ENCODE measurements at regions of chr14 and their contacts with region 1.

Region 1: GRCh38 chr14:67619446-67620216 is at the start of gene ARG2:
- DNase-seq: peak; percentile 98
- ATAC-seq: peak; percentile 94
- H3K4me3 ChIP-seq: peak within 1 kb of the TSS; percentile 57 to 94 (median 81)
- H3K4me3 Mint-ChIP-seq: peak within 1 kb of the TSS; percentile 92
- H3K27ac ChIP-seq: peak within 1 kb of the TSS; percentile 76 to 78
- H3K27ac Mint-ChIP-seq: peak within 1 kb of the TSS; percentile 94
- H3K4me1 ChIP-seq: peaks cover 12 to 18% of the 10 kb centered on the region in 2 donors
- H3K4me1 Mint-ChIP-seq: peaks cover 23% of the 10 kb centered on the region
- H3K27me3 ChIP-seq: peaks cover 0 to 4% (median 0%) of the 10 kb centered on the region in 4 experiments
- H3K27me3 Mint-ChIP-seq: no peaks in the 10 kb centered on the region
- CTCF ChIP-seq: no peak
- total RNA-seq, gene ARG2: 1.8 and 2.0 TPM in 2 replicates

Region 2: GRCh38 chr14:67666750-67667449 is 47.3 kb after region 1 on chr14:
- CTCF ChIA-PET with region 1: interaction called, 24 read pairs
- POLR2A ChIA-PET with region 1: no interaction called
- intact Hi-C with region 1: loop called (anchors 2 kb)
- DNase-seq: peak; percentile 74
- ATAC-seq: peak; percentile 75
- H3K4me3 ChIP-seq: no peak overlapping the region
- H3K4me3 Mint-ChIP-seq: peak overlapping the region; percentile 60
- H3K27ac ChIP-seq: peak overlapping the region; percentile 45 to 74
- H3K27ac Mint-ChIP-seq: peak overlapping the region; percentile 78
- H3K4me1 ChIP-seq: peaks cover 22 to 23% of the 10 kb centered on the region in 2 donors
- H3K4me1 Mint-ChIP-seq: peaks cover 51% of the 10 kb centered on the region
- H3K27me3 ChIP-seq: no peaks in the 10 kb centered on the region
- H3K27me3 Mint-ChIP-seq: no peaks in the 10 kb centered on the region
- CTCF ChIP-seq: peak; percentile 80

Region 3: GRCh38 chr14:67674481-67675169 is 55.0 kb after region 1 on chr14 and contains the start of gene VTI1B:
- CTCF ChIA-PET with region 1: interaction called, 3 read pairs
- POLR2A ChIA-PET with region 1: interaction called, 11 read pairs
- intact Hi-C with region 1: loop called (anchors 1 kb)
- DNase-seq: peak; percentile 94
- ATAC-seq: peak; percentile 92
- H3K4me3 ChIP-seq: peak within 1 kb of the TSS; percentile 71 to 97 (median 87)
- H3K4me3 Mint-ChIP-seq: peak within 1 kb of the TSS; percentile 86
- H3K27ac ChIP-seq: peak within 1 kb of the TSS; percentile 96 to 99
- H3K27ac Mint-ChIP-seq: peak within 1 kb of the TSS; percentile 95
- H3K4me1 ChIP-seq: peaks cover 19 to 22% of the 10 kb centered on the region in 2 donors
- H3K4me1 Mint-ChIP-seq: peaks cover 30% of the 10 kb centered on the region
- H3K27me3 ChIP-seq: no peaks in the 10 kb centered on the region
- H3K27me3 Mint-ChIP-seq: no peaks in the 10 kb centered on the region
- CTCF ChIP-seq: no peak
- total RNA-seq, gene VTI1B: 58.8 and 58.9 TPM in 2 replicates

Measured in B cell (primary cell).